Posterior vena cava (tissue), 2 donors: ENCODE measurements at regions of chr5 and their contacts with region 1.

Region 1: DNA sequence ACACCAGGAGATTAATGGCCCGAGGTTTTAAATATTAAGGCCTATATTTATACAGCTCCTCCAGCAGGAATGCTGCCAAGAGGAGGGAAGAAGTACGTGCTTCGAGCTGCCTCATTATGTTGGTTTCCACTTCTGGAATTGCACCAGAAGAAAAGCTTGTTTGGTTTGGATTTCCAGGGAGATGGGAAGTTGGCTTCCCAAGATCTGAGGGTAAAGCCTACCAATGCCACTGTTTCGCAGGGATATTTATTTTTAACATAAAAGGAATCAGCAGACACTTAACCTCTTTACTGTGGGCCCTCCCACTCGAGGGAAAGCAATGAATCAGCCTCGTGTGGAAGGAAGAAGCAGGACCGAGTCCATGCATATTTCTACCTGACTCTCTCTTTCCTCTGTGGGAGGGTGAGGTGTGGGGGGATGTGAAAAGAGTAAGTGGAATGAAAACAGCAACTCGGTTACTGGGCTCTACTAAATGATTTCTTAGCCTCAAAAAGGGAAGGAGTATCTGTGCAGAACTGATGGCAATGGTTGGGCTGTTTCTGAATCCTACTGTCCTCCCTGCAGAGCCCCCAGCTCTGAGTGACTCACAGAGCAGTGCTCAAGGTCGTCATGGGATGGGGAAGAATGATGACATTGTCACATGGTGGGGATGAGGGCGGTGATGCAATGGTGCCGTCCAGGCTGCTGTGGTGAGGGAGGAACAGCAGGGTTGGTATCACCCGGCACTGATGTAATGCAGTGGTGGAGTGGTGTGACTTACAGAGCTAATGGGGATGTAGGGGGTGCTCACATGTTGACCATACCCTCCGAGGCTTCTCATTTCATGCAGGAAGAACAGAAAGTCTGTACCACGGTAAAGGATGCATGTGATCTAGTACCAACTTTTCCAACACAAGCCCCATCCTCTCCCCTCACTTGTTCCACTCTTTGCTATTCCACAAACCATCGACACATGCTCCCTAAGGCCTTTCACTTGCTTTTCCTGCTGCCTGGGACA is 215.0 kb upstream of the PANK3 start:
- DNase-seq: peak; percentile 88

Region 2: DNA sequence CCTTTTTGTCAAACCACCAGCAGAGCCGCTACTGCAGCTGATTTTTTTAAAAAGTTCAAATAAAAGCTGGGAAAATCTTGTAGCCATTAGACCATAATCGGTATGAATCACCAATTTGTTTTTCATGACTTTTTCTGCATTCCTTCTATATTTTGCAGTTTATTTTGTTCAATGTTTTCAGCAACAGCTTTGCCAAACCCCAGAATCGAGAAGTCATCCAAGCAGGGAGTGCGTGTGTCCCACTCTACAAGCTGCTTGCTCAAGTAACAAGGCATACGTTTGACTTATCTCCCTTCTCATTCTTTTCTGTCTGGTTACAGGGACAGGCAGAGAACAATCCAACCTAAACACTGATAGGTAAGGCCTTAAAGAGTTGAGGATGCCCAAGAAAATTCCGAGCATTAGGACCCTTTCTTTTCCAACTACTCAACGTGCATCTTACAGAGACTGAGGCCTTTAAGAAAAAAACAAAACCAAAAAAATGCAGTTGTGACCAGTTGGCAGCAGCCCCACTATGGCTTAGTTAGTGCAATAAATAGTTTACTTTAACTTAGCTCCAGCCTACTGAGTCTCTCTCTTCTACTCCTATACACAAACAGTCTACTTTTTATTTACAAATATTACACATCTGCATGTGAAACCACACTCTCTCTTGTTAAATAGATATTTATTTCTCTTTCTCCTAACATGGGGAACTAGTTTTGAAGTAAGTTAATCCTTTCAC is 641.5 kb after region 1 on chr5:
- intact Hi-C with region 1: loop called in 1 of 2 experiments (anchors 10 kb)
- DNase-seq: no peak